ENCODE measurements at regions of chr12 and their contacts with region 1.

Region 1: DNA sequence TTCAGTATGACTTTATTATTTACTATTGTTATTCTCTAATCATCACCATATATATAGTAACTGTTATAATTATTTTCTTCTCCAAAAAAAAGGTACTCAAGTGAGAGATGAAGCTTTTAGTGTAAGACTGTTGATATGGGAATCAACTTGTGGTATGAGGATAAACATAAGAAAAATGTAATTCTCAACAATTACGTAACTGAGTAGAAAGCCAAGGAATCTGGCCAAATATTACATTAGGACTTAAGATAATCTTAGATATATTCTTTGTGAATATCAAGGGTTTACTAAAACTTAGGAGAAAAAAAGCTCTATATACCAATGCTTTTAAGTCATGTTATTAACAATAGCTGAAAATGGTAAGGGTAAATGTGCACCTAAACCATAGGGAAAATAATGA is 13.3 kb downstream of the SENP1 start:
- DNase-seq: no peak
- H3K4me3 ChIP-seq: no peak overlapping the region
- H3K27ac ChIP-seq: no peak overlapping the region
- H3K4me1 ChIP-seq: no peaks in the 10 kb centered on the region
- H3K27me3 ChIP-seq: no peaks in the 10 kb centered on the region

Region 2: GRCh38 chr12:47910486-47910885 is 182.1 kb before region 1 on chr12:
- CTCF ChIA-PET with region 1: no interaction called
- POLR2A ChIA-PET with region 1: interaction called, 13 read pairs
- DNase-seq: no peak
- H3K4me3 ChIP-seq: no peak overlapping the region
- H3K27ac ChIP-seq: no peak overlapping the region
- H3K4me1 ChIP-seq: peaks cover 0 to 2% (median 2%) of the 10 kb centered on the region in 4 experiments
- H3K27me3 ChIP-seq: peaks cover 6 to 22% (median 16%) of the 10 kb centered on the region in 5 experiments

Region 3: GRCh38 chr12:48061948-48062719 is 30.5 kb before region 1 on chr12:
- CTCF ChIA-PET with region 1: no interaction called
- POLR2A ChIA-PET with region 1: no interaction called
- DNase-seq: no peak
- H3K4me3 ChIP-seq: no peak overlapping the region
- H3K27ac ChIP-seq: no peak overlapping the region
- H3K4me1 ChIP-seq: peaks cover 0 to under 1% (median 0%) of the 10 kb centered on the region in 4 experiments
- H3K27me3 ChIP-seq: no peaks in the 10 kb centered on the region

Region 4: DNA sequence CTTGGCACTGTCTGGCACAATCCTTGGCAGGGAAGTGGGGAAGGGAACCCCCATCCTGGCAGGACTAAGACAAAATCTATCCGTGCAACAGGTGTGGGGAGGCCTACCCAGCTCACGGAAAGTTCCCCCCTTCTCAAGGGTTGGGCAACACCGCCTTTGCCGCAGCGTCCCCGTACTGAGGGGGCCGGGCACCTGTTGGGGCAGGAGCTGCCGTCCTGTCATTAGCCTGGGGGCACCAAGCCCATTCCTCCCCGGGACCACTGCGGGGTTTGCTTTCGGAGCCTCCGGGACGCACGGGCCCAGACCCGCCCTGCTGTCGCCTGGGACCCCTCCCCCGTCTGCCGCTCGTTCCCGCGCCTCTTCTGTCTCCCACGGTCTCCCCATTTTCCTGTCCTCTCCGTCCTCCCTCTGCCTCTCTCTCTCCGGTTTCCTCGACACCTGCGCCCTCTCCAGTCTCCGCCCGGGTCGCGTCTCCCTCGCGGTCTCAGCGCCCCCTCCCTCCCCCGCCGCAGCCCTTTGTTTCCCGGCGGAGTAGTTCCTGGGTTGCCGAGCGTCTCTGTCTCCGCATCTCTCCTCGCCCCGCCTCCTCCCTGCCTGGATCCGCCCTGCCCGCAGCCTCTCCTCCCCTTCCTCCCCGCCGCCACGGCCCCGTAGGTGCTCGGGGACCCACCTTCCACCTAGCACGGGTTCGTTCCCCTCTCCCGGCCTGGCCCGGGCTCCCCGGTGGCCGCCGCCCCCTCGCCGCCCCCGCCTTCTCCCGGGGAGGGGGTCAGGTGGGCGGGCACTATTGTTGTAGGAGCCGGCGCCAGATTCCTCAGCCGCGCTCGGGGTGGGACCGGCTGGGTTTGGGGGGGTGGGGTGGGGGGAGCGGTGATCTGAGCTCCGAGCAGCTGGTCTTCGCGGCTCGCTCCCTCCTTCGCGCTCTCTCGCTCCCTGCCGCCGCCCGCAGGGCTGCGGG is 725.5 kb after region 1 on chr12 and contains the start of gene CACNB3:
- CTCF ChIA-PET with region 1: no interaction called
- POLR2A ChIA-PET with region 1: no interaction called
- DNase-seq: peak in 2 of 3 donors; percentile 57 to 72
- H3K4me3 ChIP-seq: peak within 1 kb of the TSS; percentile 53 to 89 (median 67)
- H3K27ac ChIP-seq: no peak within 1 kb of the TSS
- H3K4me1 ChIP-seq: peaks cover 0 to 52% (median 36%) of the 10 kb centered on the region in 4 experiments
- H3K27me3 ChIP-seq: peaks cover 0 to 9% (median 0%) of the 10 kb centered on the region in 5 experiments